Transverse colon (tissue), 4 donors: ENCODE measurements at regions of chr20 and their contacts with region 1.

Region 1: DNA sequence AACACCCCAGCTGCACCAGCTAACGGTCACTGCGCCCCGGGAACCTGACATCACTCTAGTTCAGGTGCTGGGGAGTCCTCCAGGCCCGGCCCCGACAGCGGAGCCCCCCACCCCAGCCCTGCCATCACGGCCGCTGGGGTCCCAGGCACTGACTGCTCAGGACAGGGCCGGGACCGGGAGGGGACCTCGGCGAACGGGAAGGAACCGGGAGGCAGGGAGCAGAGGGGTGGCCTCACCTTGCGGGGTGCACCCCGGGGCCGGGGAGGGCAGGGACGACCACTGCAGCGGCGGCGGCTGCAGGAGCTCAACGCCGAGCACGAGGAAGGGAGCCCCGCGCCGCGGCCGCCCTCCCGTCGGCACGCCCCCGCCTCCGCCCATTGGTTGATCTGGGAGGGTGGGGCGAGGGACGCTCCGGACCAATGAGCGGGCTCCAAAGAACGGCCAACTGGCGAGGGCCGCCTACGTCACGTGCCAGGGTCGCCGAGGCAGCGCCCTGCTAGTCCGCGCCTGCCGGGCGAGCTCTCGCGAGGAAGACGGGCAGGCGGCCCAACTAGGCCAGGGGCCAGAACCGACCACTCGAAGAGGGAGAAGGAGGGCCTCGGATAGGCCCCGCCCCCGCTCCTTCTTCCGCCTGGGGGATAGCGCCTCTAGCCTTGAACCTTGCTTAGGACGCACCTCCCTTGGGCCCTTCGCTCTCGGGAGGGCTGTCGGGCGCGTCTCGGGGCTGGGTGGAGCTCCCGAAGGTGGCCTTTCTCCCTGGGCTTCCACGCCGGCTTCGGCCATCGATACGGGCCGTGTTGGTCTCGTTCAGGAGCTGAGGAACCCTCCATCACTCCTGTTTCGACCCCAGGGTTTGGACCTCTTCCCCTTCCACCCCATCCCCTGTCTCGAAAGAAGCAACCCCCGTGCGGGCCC is at the start of gene ADISSP:
- DNase-seq: peak; percentile 99
- H3K4me3 ChIP-seq: peak within 1 kb of the TSS; percentile 54 to 97 (median 68)
- H3K27ac ChIP-seq: peak within 1 kb of the TSS; percentile 90 to 97 (median 94)
- H3K4me1 ChIP-seq: peaks cover 0 to 52% (median 33%) of the 10 kb centered on the region in 4 donors
- H3K27me3 ChIP-seq: no peaks in the 10 kb centered on the region
- CTCF ChIP-seq: no peak
- EP300 ChIP-seq: no peak
- POLR2A ChIP-seq: peak; percentile 70
- total RNA-seq, gene ADISSP: 3.0 to 19.9 (median 16.3) TPM

Region 2: DNA sequence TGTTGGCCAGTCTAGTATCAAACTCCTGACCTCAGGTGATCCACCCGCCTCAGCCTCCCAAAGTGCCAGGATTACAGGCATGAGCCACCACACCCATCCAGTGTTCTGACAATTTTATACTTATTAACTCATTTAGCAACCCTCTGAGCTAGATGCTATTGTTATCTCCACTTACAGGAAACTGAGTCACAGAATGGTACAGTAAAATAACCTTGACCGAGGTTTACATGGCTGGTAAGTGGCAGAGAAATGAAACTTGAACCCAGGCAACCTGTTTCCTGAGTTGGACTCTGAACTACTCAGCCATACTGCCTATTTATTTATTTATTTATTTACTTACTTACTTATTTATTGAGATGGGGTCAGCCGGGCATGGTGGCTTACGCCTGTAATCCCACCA is 48.6 kb before region 1 on chr20:
- in situ Hi-C with region 1: no loop called
- intact Hi-C with region 1: loop called (anchors 1 kb)
- DNase-seq: no peak
- H3K4me3 ChIP-seq: no peak overlapping the region
- H3K27ac ChIP-seq: no peak overlapping the region
- H3K4me1 ChIP-seq: no peaks in the 10 kb centered on the region
- H3K27me3 ChIP-seq: peaks cover 5% of the 10 kb centered on the region
- CTCF ChIP-seq: no peak
- EP300 ChIP-seq: no peak
- POLR2A ChIP-seq: no peak